ENCODE measurements at regions of chr4 and their contacts with region 1.

Region 1: GRCh38 chr4:140095694-140096482 is 58.1 kb downstream of the MAML3 start:
- DNase-seq: peak; percentile 95
- H3K4me3 ChIP-seq: peak overlapping the region in 1 of 3 experiments; percentile 57
- H3K27ac ChIP-seq: peak overlapping the region; percentile 100
- H3K4me1 ChIP-seq: peaks cover 97% of the 10 kb centered on the region
- H3K27me3 ChIP-seq: no peaks in the 10 kb centered on the region
- CTCF ChIP-seq: no peak
- POLR2A ChIP-seq: peak; percentile 53

Region 2: DNA sequence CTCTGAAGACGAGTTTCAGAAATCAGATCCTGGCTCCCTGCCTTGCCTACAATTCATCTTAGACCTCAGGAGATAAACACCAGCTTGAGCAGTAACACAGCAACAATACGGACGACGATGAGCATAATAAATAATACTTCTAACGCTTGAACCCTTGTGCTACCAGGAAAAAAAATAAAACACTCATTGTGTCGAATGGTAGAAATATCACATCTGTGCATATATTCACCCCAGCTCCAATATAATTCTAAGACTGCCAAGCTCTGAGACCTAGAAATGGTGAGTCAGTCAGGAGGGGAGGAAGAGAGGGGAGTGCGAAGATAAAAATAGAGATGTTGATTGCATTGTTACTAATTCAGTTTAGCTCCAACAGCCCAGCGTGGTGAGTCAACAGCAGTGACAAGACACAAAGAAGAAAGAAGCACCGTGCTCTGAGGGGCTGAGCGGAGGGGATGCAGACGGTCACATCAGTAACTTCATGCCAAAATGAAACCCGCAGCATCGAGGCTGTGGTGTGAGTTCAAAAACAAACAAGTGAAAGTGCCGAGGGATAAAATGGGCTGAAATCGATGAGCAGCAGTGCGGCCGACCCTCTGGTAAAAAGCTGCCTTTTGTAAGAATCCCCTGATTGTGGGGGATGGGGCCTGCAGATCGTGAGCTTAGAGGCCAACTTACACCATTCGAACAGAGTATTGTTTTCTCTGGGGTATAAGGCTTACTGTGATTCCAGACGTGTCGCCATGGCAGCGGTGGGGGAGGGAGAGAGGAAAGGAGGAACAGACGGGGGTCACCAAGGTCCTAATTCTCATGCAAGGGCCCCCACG is 279.9 kb before region 1 on chr4:
- CTCF ChIA-PET with region 1: no interaction called
- POLR2A ChIA-PET with region 1: no interaction called
- dilution Hi-C with region 1: no loop called
- intact Hi-C with region 1: loop called (anchors 5 kb)
- DNase-seq: peak; percentile 94
- H3K4me3 ChIP-seq: peak overlapping the region in 2 of 3 experiments; percentile 31 to 53
- H3K27ac ChIP-seq: peak overlapping the region; percentile 61
- H3K4me1 ChIP-seq: peaks cover 22% of the 10 kb centered on the region
- H3K27me3 ChIP-seq: no peaks in the 10 kb centered on the region
- CTCF ChIP-seq: no peak
- POLR2A ChIP-seq: no peak

Region 3: GRCh38 chr4:139849219-139849618 is 246.7 kb before region 1 on chr4:
- CTCF ChIA-PET with region 1: no interaction called
- POLR2A ChIA-PET with region 1: no interaction called
- dilution Hi-C with region 1: no loop called
- intact Hi-C with region 1: no loop called
- DNase-seq: no peak
- H3K4me3 ChIP-seq: no peak overlapping the region
- H3K27ac ChIP-seq: no peak overlapping the region
- H3K4me1 ChIP-seq: no peaks in the 10 kb centered on the region
- H3K27me3 ChIP-seq: no peaks in the 10 kb centered on the region
- CTCF ChIP-seq: no peak
- POLR2A ChIP-seq: no peak

Region 4: DNA sequence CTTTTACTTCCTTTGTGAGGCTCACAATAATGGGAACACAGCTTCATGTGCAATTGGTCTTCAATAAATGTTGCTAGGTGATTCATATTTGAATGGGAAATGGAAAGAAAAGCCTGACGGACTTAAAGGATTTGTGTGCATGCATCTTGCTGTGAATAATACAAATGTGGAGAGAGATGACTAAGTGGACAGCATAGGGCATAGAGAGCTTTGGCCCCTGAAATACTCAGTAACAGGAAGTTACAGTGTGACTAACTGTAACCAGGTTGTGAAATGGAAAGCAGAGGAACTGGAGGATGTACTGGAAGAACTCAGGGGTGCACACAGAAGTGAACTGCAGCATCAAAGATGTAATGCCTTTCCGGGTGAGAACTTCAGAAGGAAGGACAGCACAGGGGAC is 223.6 kb before region 1 on chr4:
- CTCF ChIA-PET with region 1: no interaction called
- POLR2A ChIA-PET with region 1: no interaction called
- dilution Hi-C with region 1: no loop called
- intact Hi-C with region 1: loop called (anchors 5 kb)
- DNase-seq: peak; percentile 93
- H3K4me3 ChIP-seq: no peak overlapping the region
- H3K27ac ChIP-seq: peak overlapping the region; percentile 56
- H3K4me1 ChIP-seq: peaks cover 16% of the 10 kb centered on the region
- H3K27me3 ChIP-seq: no peaks in the 10 kb centered on the region
- CTCF ChIP-seq: no peak
- POLR2A ChIP-seq: no peak

Region 5: GRCh38 chr4:139919521-139919920 is 176.4 kb before region 1 on chr4:
- CTCF ChIA-PET with region 1: interaction called, 3 read pairs
- POLR2A ChIA-PET with region 1: no interaction called
- dilution Hi-C with region 1: no loop called
- intact Hi-C with region 1: loop called (anchors 2 kb)
- DNase-seq: peak; percentile 95
- H3K4me3 ChIP-seq: no peak overlapping the region
- H3K27ac ChIP-seq: peak overlapping the region; percentile 84
- H3K4me1 ChIP-seq: peaks cover 47% of the 10 kb centered on the region
- H3K27me3 ChIP-seq: no peaks in the 10 kb centered on the region
- CTCF ChIP-seq: no peak
- POLR2A ChIP-seq: peak; percentile 21

Region 6: DNA sequence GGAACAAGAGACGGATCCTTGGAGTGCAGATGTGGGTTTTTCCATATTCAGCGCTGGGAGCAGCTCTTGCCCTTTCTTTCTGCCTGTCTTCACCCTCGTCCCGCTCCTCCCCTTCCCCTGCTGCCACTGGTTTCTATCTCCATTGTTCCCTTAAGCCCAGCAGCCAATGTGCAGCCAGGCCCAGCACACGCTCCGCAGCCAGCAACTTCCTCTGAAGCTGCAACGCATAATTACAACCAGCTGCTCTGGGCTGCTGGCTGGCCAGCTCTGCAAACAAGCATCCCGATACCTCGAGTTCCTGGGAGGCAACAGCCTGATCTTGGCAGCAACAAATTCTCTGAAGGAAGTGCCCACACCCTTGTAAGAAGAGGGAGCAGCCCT is 141.7 kb after region 1 on chr4:
- CTCF ChIA-PET with region 1: no interaction called
- POLR2A ChIA-PET with region 1: interaction called, 6 read pairs
- dilution Hi-C with region 1: no loop called
- intact Hi-C with region 1: loop called (anchors 5 kb)
- DNase-seq: peak; percentile 89
- H3K4me3 ChIP-seq: no peak overlapping the region
- H3K27ac ChIP-seq: peak overlapping the region; percentile 30
- H3K4me1 ChIP-seq: peaks cover 34% of the 10 kb centered on the region
- H3K27me3 ChIP-seq: no peaks in the 10 kb centered on the region
- CTCF ChIP-seq: no peak
- POLR2A ChIP-seq: no peak

Measured in endothelial cell of umbilical vein (primary cell).